Activated CD8-positive, alpha-beta T cell treated with anti-CD3 and anti-CD28 coated beads, Interleukin-2, amount 10 ng/mL, durations not matched to agents 7 days and 5 days (primary cell): ENCODE measurements at regions of chr11 and their contacts with region 1.

Region 1: GRCh38 chr11:33039274-33040032 is at the start of gene TCP11L1:
- DNase-seq: peak; percentile 85
- ATAC-seq: peak; percentile 90
- H3K4me3 Mint-ChIP-seq: peak within 1 kb of the TSS; percentile 90
- H3K27ac Mint-ChIP-seq: peak within 1 kb of the TSS; percentile 97
- H3K4me1 Mint-ChIP-seq: peaks cover 28% of the 10 kb centered on the region
- H3K27me3 Mint-ChIP-seq: peaks cover 8% of the 10 kb centered on the region
- total RNA-seq, gene TCP11L1: 17.2 to 21.0 TPM

Region 2: GRCh38 chr11:32775908-32776307 is 263.5 kb before region 1 on chr11:
- CTCF ChIA-PET with region 1: no interaction called
- POLR2A ChIA-PET with region 1: no interaction called
- DNase-seq: no peak
- ATAC-seq: no peak
- H3K4me3 Mint-ChIP-seq: peak overlapping the region; percentile 52
- H3K27ac Mint-ChIP-seq: peak overlapping the region; percentile 5
- H3K4me1 Mint-ChIP-seq: peaks cover 15% of the 10 kb centered on the region
- H3K27me3 Mint-ChIP-seq: no peaks in the 10 kb centered on the region

Region 3: DNA sequence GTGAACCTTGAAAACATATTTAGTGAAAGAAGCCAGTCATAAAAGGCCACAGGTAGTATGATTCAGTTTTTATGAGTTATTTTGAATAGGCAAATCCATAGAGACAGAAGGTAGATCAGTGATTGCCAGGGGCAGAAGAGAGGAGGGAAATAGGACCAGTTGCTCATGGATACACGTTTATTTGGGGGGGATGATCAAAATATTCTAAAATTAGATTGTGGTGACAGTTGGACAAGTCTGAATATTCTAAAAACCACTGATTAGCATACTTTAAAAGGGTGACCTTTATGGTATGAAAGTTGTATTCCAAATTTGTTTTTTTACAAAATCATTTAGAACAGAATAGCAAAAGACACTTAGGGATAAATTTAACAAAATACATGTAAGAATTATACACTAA is 118.2 kb before region 1 on chr11:
- CTCF ChIA-PET with region 1: no interaction called
- POLR2A ChIA-PET with region 1: no interaction called
- DNase-seq: no peak
- ATAC-seq: no peak
- H3K4me3 Mint-ChIP-seq: no peak overlapping the region
- H3K27ac Mint-ChIP-seq: no peak overlapping the region
- H3K4me1 Mint-ChIP-seq: peaks cover 26% of the 10 kb centered on the region
- H3K27me3 Mint-ChIP-seq: no peaks in the 10 kb centered on the region

Region 4: GRCh38 chr11:33015621-33016551 is 23.6 kb before region 1 on chr11 and contains the start of gene DEPDC7:
- CTCF ChIA-PET with region 1: interaction called, 4 read pairs
- POLR2A ChIA-PET with region 1: interaction called, 14 read pairs
- DNase-seq: peak; percentile 83
- ATAC-seq: peak; percentile 89
- H3K4me3 Mint-ChIP-seq: peak within 1 kb of the TSS; percentile 77
- H3K27ac Mint-ChIP-seq: peak within 1 kb of the TSS; percentile 72
- H3K4me1 Mint-ChIP-seq: peaks cover 24% of the 10 kb centered on the region
- H3K27me3 Mint-ChIP-seq: peaks cover 37% of the 10 kb centered on the region
- total RNA-seq, gene DEPDC7: 1.2 to 2.8 TPM

Region 5: DNA sequence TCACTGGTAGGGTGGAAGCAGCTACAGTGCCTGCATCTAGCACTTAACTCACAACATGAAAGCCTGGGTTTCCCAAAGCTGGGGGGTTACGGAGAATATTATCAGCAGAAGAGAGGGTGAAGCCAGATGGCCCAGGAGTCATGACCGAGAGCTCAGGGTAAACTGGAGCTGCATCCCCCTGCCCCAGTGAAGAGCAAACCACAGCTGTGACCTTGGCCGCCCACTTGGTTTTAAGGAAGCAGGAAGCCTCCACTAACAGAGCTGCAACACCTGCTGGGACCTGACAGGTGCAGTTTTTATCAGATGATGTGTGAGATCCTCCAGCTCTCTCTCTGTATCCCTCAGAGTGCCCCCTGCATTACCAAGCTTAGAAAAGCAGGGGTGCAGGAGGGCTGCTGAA is 20.8 kb after region 1 on chr11:
- CTCF ChIA-PET with region 1: interaction called, 9 read pairs
- POLR2A ChIA-PET with region 1: interaction called, 11 read pairs
- DNase-seq: no peak
- ATAC-seq: no peak
- H3K4me3 Mint-ChIP-seq: no peak overlapping the region
- H3K27ac Mint-ChIP-seq: no peak overlapping the region
- H3K4me1 Mint-ChIP-seq: peaks cover 29% of the 10 kb centered on the region
- H3K27me3 Mint-ChIP-seq: no peaks in the 10 kb centered on the region